ENCODE measurements at regions of chr9 and their contacts with region 1.

Region 1: GRCh38 chr9:106862825-106863720 is at the start of gene ZNF462:
- DNase-seq: peak; percentile 37 to 58
- ATAC-seq: peak; percentile 32 to 37
- H3K4me3 ChIP-seq: peak within 1 kb of the TSS; percentile 82 to 87 (median 84)
- H3K27ac ChIP-seq: peak within 1 kb of the TSS; percentile 88 to 92 (median 89)
- H3K4me1 ChIP-seq: peaks cover 17 to 35% of the 10 kb centered on the region in 2 donors
- H3K27me3 ChIP-seq: no peaks in the 10 kb centered on the region
- CTCF ChIP-seq: peak; percentile 8 to 99 (median 69)
- POLR2A ChIP-seq: no peak
- total RNA-seq, gene ZNF462: 9.3 to 13.3 (median 11.4) TPM

Region 2: GRCh38 chr9:105901514-105902109 is 961.5 kb before region 1 on chr9:
- in situ Hi-C with region 1: loop called in 1 of 4 experiments (anchors 25 kb)
- intact Hi-C with region 1: no loop called
- DNase-seq: peak; percentile 20 to 53
- ATAC-seq: peak; percentile 87 to 95
- H3K4me3 ChIP-seq: no peak overlapping the region
- H3K27ac ChIP-seq: peak overlapping the region in 1 of 4 donors; percentile 15
- H3K4me1 ChIP-seq: no peaks in the 10 kb centered on the region
- H3K27me3 ChIP-seq: no peaks in the 10 kb centered on the region
- CTCF ChIP-seq: peak; percentile 70 to 84 (median 74)
- POLR2A ChIP-seq: no peak

Region 3: DNA sequence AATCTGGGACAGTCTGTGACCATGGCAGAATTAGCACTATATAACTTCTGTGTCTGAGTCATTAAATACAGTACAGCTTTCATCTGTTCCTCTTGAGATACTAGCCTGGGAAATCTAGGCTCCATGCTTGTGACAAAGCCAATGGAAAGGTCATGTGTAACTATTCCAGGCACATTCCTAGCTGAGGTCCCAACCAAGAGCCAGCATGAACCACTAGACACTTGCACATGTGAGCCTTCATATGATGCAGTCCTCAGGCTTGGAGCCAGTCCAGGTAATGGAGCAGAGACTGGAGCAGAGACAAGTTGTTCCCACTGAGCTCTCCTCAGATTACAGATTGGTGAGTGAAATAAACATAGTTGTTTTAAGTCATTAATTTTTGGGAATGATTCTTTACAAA is 412.5 kb before region 1 on chr9:
- in situ Hi-C with region 1: no loop called
- intact Hi-C with region 1: loop called (anchors 2 kb)
- DNase-seq: peak; percentile 83 to 91
- ATAC-seq: peak; percentile 96 to 98
- H3K4me3 ChIP-seq: no peak overlapping the region
- H3K27ac ChIP-seq: peak overlapping the region; percentile 75 to 83 (median 80)
- H3K4me1 ChIP-seq: peaks cover 11 to 19% of the 10 kb centered on the region in 2 donors
- H3K27me3 ChIP-seq: no peaks in the 10 kb centered on the region
- CTCF ChIP-seq: no peak
- POLR2A ChIP-seq: no peak

Region 4: DNA sequence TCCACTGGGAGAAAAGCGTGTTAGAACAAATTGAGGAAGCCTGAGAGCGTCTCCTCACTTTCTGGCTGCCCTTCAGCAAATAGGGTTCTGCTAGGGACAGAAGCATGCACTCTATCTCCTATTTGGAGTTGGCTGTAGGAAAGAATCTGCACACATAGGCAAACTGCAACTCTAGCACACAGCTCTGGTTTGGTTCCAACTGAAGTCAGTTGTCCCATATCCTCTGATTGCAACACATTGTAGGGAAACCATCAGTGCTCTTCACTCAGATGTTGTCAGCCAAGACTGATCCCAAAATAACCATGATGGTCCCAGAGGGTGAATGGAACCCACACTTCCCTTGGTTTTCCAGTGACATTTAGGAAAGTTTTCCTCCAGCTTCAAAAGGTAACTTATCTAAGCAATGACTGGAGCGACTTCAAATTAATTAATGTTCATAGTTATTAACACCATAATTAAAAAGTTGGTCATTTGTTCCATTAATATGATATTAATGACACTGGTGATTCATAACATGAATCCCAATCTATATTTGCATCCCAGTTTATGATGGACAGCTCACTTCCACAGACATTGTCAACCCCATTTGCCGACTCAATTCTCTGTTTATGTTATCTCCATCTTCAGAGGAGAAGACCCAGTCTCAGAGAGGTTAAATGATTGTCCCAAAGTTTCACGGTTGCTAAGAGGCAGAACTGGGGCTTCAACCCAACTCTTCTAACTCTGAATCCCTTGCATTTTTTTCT is 136.8 kb before region 1 on chr9:
- in situ Hi-C with region 1: no loop called
- intact Hi-C with region 1: loop called (anchors 2 kb)
- DNase-seq: peak; percentile 46 to 67
- ATAC-seq: peak; percentile 97 to 98
- H3K4me3 ChIP-seq: no peak overlapping the region
- H3K27ac ChIP-seq: peak overlapping the region; percentile 74 to 80 (median 77)
- H3K4me1 ChIP-seq: peaks cover 33 to 56% of the 10 kb centered on the region in 2 donors
- H3K27me3 ChIP-seq: no peaks in the 10 kb centered on the region
- CTCF ChIP-seq: no peak
- POLR2A ChIP-seq: no peak

Region 5: GRCh38 chr9:106771631-106772030 is 91.4 kb before region 1 on chr9:
- in situ Hi-C with region 1: no loop called
- intact Hi-C with region 1: loop called (anchors 5 kb)
- DNase-seq: peak; percentile 86 to 97
- ATAC-seq: peak; percentile 78 to 89
- H3K4me3 ChIP-seq: no peak overlapping the region
- H3K27ac ChIP-seq: peak overlapping the region; percentile 76 to 88 (median 86)
- H3K4me1 ChIP-seq: peaks cover 21 to 26% of the 10 kb centered on the region in 2 donors
- H3K27me3 ChIP-seq: no peaks in the 10 kb centered on the region
- CTCF ChIP-seq: no peak
- POLR2A ChIP-seq: peak in 1 of 2 donors; percentile 42

Region 6: DNA sequence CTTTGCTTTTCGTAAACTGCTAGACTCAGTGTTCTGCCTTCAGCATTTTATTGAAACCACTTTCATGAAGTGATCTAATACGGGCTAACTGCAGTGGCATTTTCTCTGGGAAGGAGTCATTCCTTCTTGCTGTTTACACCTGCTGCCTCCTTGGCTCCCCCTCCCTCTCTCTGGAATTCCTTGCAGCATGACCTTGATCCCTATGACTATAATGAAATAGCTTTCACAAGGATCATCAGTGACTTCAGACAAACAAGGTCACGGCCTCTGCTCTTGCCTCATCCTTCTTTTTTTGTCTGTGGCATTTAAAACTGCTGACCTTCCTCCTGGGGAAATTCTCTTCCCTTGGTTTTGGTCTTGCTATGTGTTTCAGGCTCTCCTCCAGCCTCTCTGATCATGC is 90.1 kb after region 1 on chr9:
- in situ Hi-C with region 1: no loop called
- intact Hi-C with region 1: loop called (anchors 2 kb)
- DNase-seq: peak; percentile 6 to 57
- ATAC-seq: peak; percentile 74 to 88
- H3K4me3 ChIP-seq: no peak overlapping the region
- H3K27ac ChIP-seq: peak overlapping the region; percentile 46 to 65 (median 48)
- H3K4me1 ChIP-seq: peaks cover 22 to 26% of the 10 kb centered on the region in 2 donors
- H3K27me3 ChIP-seq: no peaks in the 10 kb centered on the region
- CTCF ChIP-seq: no peak
- POLR2A ChIP-seq: no peak

Region 7: GRCh38 chr9:107282753-107283625 is 419.9 kb after region 1 on chr9 and contains the start of gene RAD23B:
- in situ Hi-C with region 1: no loop called
- intact Hi-C with region 1: loop called (anchors 5 kb)
- DNase-seq: peak; percentile 97 to 98
- ATAC-seq: peak; percentile 78 to 79
- H3K4me3 ChIP-seq: peak within 1 kb of the TSS; percentile 73 to 91 (median 86)
- H3K27ac ChIP-seq: peak within 1 kb of the TSS; percentile 90 to 99 (median 97)
- H3K4me1 ChIP-seq: peaks cover 30 to 33% of the 10 kb centered on the region in 2 donors
- H3K27me3 ChIP-seq: no peaks in the 10 kb centered on the region
- CTCF ChIP-seq: peak in 2 of 5 experiments; percentile 3 to 25
- POLR2A ChIP-seq: peak; percentile 97 to 98
- total RNA-seq, gene RAD23B: 163 to 249 (median 188) TPM

Measured in gastrocnemius medialis (tissue), 4 donors.